Caco-2 (cell line): ENCODE measurements at regions of chr2 and their contacts with region 1.

Region 1: DNA sequence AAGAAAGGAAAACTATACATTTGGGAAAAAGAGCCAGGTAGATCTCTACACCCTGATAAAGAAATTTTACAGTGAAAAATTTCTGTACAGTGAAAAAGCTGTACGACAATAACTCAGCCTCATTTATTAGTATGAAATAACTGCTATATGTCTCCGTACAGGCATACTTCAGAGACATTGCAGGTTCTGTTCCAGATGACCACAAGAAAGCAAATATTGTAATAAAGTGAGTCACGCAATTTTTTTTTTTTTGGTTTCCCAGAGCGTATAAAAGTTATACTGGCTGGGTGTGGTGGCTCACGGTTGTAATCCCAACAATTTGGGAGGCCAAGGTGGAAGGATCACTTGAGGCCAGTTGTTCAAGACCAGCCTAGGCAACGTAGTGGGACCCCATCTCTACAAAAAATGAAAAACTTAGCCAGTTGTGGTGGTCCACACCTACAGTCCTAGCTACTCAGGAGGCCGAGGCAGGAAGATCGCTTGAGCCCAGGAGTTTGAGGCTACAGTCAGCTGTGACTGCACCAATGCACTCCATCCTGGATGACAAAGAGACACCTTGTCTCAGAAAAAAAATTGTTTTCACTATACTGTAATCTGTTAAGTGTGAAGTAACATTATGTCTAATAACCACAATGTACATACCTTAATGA is 28.2 kb upstream of the AMMECR1L start:
- DNase-seq: no peak
- H3K4me3 ChIP-seq: no peak overlapping the region
- H3K4me3 Mint-ChIP-seq: no peak overlapping the region
- H3K27ac Mint-ChIP-seq: no peak overlapping the region
- H3K4me1 ChIP-seq: peaks cover 1% of the 10 kb centered on the region
- H3K4me1 Mint-ChIP-seq: peaks cover 1% of the 10 kb centered on the region
- H3K27me3 ChIP-seq: no peaks in the 10 kb centered on the region
- H3K27me3 Mint-ChIP-seq: no peaks in the 10 kb centered on the region
- CTCF ChIP-seq: no peak

Region 2: DNA sequence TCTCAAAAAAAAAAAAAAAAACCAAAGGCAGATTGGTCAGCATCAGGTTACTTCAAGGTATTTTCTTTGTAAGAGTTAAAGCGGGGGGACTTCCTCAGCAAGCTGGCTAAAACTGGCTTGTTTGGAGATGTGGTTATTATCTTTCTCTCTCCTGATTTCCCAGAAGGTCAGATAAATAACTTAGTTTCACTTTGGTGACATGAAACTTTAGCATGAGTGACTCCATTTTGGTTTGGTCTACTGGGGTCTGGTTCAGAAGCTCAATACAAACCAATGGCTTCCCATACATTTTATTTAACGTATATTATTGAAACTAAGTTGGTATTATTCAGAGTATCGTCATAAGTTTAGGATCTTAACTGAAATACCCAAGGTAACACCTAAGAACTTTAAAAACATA is 13.5 kb after region 1 on chr2:
- CTCF ChIA-PET with region 1: interaction called, 4 read pairs
- POLR2A ChIA-PET with region 1: interaction called, 20 read pairs
- intact Hi-C with region 1: loop called (anchors 2 kb)
- DNase-seq: no peak
- H3K4me3 ChIP-seq: no peak overlapping the region
- H3K4me3 Mint-ChIP-seq: no peak overlapping the region
- H3K27ac Mint-ChIP-seq: no peak overlapping the region
- H3K4me1 ChIP-seq: peaks cover 11% of the 10 kb centered on the region
- H3K4me1 Mint-ChIP-seq: peaks cover 6% of the 10 kb centered on the region
- H3K27me3 ChIP-seq: no peaks in the 10 kb centered on the region
- H3K27me3 Mint-ChIP-seq: no peaks in the 10 kb centered on the region
- CTCF ChIP-seq: no peak